Activated CD4-positive, alpha-beta memory T cell treated with anti-CD3 and anti-CD28 coated beads for 36 hours (primary cell): ENCODE measurements at regions of chr1 and their contacts with region 1.

Region 1: GRCh38 chr1:28248283-28249012 is 10.9 kb upstream of the SESN2 start:
- DNase-seq: peak; percentile 92
- H3K4me3 Mint-ChIP-seq: peak overlapping the region; percentile 85
- H3K27ac Mint-ChIP-seq: peak overlapping the region; percentile 91
- H3K4me1 Mint-ChIP-seq: peaks cover 46% of the 10 kb centered on the region
- H3K27me3 Mint-ChIP-seq: no peaks in the 10 kb centered on the region

Region 2: GRCh38 chr1:27632387-27633297 is 615.8 kb before region 1 on chr1:
- CTCF ChIA-PET with region 1: no interaction called
- POLR2A ChIA-PET with region 1: no interaction called
- intact Hi-C with region 1: no loop called
- DNase-seq: peak; percentile 80
- H3K4me3 Mint-ChIP-seq: peak overlapping the region; percentile 24
- H3K27ac Mint-ChIP-seq: peak overlapping the region; percentile 74
- H3K4me1 Mint-ChIP-seq: peaks cover 69% of the 10 kb centered on the region
- H3K27me3 Mint-ChIP-seq: no peaks in the 10 kb centered on the region

Region 3: GRCh38 chr1:28235755-28236655 is 12.4 kb before region 1 on chr1 and contains the start of gene ATP5IF1:
- CTCF ChIA-PET with region 1: interaction called, 27 read pairs
- POLR2A ChIA-PET with region 1: interaction called, 34 read pairs
- intact Hi-C with region 1: loop called (anchors 1 kb)
- DNase-seq: peak; percentile 97
- H3K4me3 Mint-ChIP-seq: no peak within 1 kb of the TSS
- H3K27ac Mint-ChIP-seq: no peak within 1 kb of the TSS
- H3K4me1 Mint-ChIP-seq: peaks cover 19% of the 10 kb centered on the region
- H3K27me3 Mint-ChIP-seq: no peaks in the 10 kb centered on the region
- total RNA-seq, gene ATP5IF1: 174 to 181 TPM

Region 4: DNA sequence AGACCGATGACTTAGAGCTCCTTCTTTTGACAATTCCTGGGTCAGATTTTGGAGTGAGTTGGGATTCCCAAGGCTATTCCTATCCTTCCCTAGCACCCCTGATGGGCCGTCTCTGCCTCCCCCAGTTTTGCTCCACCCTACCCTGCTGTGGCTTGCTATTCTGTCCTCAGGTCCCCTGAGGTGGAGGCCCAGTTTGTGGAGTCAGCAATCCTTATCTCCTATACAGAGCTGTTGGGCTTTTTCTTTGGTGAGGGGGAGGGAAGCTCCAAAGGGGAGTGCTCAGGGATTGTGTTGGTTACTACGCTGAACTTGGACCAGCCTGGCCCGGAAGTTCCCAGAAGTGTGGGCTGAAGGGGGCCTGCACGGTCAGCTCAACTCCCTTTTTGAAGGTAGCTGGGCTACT is 18.5 kb after region 1 on chr1:
- CTCF ChIA-PET with region 1: interaction called, 20 read pairs
- POLR2A ChIA-PET with region 1: no interaction called
- intact Hi-C with region 1: no loop called
- DNase-seq: no peak
- H3K4me3 Mint-ChIP-seq: no peak overlapping the region
- H3K27ac Mint-ChIP-seq: no peak overlapping the region
- H3K4me1 Mint-ChIP-seq: peaks cover 6% of the 10 kb centered on the region
- H3K27me3 Mint-ChIP-seq: no peaks in the 10 kb centered on the region

Region 5: GRCh38 chr1:28359592-28360239 is 111.3 kb after region 1 on chr1:
- CTCF ChIA-PET with region 1: interaction called, 33 read pairs
- POLR2A ChIA-PET with region 1: no interaction called
- intact Hi-C with region 1: no loop called
- DNase-seq: peak; percentile 84
- H3K4me3 Mint-ChIP-seq: no peak overlapping the region
- H3K27ac Mint-ChIP-seq: no peak overlapping the region
- H3K4me1 Mint-ChIP-seq: no peaks in the 10 kb centered on the region
- H3K27me3 Mint-ChIP-seq: no peaks in the 10 kb centered on the region

Region 6: DNA sequence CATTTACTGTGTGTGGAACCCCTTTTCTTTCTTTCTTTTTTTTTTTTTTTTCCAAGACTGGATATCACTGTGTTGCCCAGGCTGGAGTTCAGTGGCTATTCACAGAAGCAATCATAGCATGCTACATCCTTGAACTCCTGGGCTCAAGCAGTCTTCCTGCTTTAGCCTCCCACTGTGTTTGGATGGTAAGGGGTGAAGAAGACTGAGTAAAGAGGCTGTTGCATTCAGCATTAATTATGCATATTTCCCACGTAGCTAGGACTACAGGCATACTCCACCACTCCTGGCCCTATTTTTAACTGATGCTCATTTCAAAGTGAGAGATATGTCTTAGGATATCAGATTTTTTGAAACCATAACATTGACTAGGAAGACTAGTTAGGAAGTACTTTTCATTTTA is 160.6 kb after region 1 on chr1:
- CTCF ChIA-PET with region 1: interaction called, 10 read pairs
- POLR2A ChIA-PET with region 1: no interaction called
- intact Hi-C with region 1: no loop called
- DNase-seq: no peak
- H3K4me3 Mint-ChIP-seq: no peak overlapping the region
- H3K27ac Mint-ChIP-seq: no peak overlapping the region
- H3K4me1 Mint-ChIP-seq: peaks cover 2% of the 10 kb centered on the region
- H3K27me3 Mint-ChIP-seq: no peaks in the 10 kb centered on the region

Region 7: GRCh38 chr1:28581536-28582247 is 333.2 kb after region 1 on chr1:
- CTCF ChIA-PET with region 1: interaction called, 12 read pairs
- POLR2A ChIA-PET with region 1: interaction called, 5 read pairs
- intact Hi-C with region 1: loop called (anchors 5 kb)
- DNase-seq: peak; percentile 97
- H3K4me3 Mint-ChIP-seq: peak overlapping the region; percentile 91
- H3K27ac Mint-ChIP-seq: peak overlapping the region; percentile 89
- H3K4me1 Mint-ChIP-seq: peaks cover 29% of the 10 kb centered on the region
- H3K27me3 Mint-ChIP-seq: no peaks in the 10 kb centered on the region